ENCODE measurements at regions of chr3 and their contacts with region 1.

Region 1: DNA sequence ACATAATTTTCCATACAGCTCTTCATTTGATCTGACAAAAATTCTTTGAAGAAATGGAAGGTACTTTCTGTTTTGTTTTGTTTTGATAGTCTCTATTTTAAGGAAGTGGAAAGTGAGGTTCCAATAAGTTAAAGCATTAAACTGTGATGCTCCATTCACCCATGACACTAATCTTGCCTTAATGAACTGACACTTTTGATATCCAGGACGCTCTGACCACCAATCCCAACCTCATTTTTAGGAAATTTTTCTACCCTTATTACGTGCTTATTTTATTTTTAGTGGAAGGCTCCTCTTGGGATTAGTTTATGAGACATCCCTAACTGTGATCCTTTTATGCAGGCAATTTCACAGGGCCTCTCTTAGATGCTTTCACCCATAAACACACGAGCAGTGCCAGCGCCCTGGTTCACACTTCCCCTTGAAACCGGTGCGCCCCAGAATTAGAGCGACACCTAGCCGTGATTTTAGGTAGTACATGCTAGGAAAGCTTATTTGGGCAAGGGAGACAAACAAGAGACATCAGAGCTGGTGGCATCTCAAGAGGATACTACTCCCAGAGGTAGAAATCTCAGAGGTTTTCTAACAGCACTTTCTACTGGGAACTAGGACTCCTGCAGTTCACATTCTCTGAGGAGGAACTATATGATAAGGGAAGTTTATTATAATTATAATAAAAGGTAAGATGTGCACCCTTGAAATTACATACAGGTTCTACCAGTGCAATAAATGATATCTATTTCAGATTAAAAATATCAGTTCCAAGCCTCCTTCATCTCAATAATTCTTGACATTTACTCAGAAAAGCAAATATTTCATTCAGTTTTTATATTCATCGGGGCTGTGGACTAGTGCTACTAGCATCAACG is 173.9 kb downstream of the SLC9A9 start:
- DNase-seq: peak; percentile 84
- H3K4me3 Mint-ChIP-seq: peak overlapping the region; percentile 64
- H3K27ac Mint-ChIP-seq: no peak overlapping the region
- H3K4me1 Mint-ChIP-seq: peaks cover 8% of the 10 kb centered on the region
- H3K27me3 Mint-ChIP-seq: no peaks in the 10 kb centered on the region

Region 2: GRCh38 chr3:143001369-143002082 is 672.8 kb before region 1 on chr3 and contains the start of gene U2SURP:
- CTCF ChIA-PET with region 1: interaction called, 8 read pairs
- POLR2A ChIA-PET with region 1: no interaction called
- intact Hi-C with region 1: loop called (anchors 10 kb)
- DNase-seq: peak; percentile 95
- H3K4me3 Mint-ChIP-seq: peak within 1 kb of the TSS; percentile 88
- H3K27ac Mint-ChIP-seq: peak within 1 kb of the TSS; percentile 96
- H3K4me1 Mint-ChIP-seq: peaks cover 34% of the 10 kb centered on the region
- H3K27me3 Mint-ChIP-seq: no peaks in the 10 kb centered on the region
- total RNA-seq, gene U2SURP: 178 to 182 TPM

Region 3: DNA sequence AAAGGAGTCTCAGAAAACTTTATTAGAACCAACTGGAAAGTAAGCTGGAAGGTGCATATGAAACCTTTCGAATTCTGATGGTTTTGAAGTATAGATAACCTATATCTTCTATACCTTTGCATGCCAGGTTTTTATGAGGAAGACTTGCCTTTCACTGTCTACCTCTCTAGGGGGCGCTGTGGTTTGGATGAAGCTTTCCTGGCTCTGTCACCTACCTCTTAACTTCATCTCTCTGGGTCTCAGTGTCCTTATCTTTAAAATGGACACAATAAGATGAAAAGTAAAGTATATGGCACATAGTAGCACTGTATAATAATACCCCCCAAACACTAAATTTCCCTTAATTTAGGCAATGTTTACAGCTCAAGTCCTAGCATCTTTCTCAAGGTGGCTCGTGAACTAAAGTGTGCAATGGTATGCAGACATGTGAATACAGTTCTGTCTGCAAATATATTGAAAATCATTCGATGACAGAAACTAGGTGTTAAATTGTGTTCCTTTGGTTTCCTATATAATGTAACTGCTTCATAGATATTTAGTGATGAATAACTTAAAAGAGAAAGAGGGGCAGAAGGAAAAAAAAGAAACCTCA is 240.5 kb before region 1 on chr3:
- CTCF ChIA-PET with region 1: interaction called, 21 read pairs
- POLR2A ChIA-PET with region 1: no interaction called
- intact Hi-C with region 1: loop called (anchors 1 kb)
- DNase-seq: peak; percentile 53
- H3K4me3 Mint-ChIP-seq: no peak overlapping the region
- H3K27ac Mint-ChIP-seq: no peak overlapping the region
- H3K4me1 Mint-ChIP-seq: no peaks in the 10 kb centered on the region
- H3K27me3 Mint-ChIP-seq: no peaks in the 10 kb centered on the region

Region 4: DNA sequence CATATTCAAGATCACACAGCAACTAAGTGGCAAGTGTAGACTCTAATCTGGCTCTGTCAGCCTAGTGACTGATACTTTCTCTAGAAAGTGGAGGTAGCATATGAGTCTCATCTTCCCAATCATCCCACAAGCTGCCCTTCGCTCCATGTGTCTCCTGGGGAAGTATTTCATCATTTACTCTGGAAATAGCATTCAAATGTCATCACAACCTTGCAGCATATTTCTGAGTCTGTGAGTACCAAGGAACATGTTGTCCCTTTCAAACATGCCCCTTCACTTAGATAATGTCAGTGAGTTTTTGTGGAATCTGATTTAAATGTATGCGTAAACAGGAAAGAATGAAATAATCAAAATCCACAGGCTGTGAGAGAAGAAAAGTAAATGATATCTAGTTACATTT is 148.9 kb before region 1 on chr3:
- CTCF ChIA-PET with region 1: no interaction called
- POLR2A ChIA-PET with region 1: no interaction called
- intact Hi-C with region 1: no loop called
- DNase-seq: no peak
- H3K4me3 Mint-ChIP-seq: no peak overlapping the region
- H3K27ac Mint-ChIP-seq: no peak overlapping the region
- H3K4me1 Mint-ChIP-seq: no peaks in the 10 kb centered on the region
- H3K27me3 Mint-ChIP-seq: no peaks in the 10 kb centered on the region

Region 5: DNA sequence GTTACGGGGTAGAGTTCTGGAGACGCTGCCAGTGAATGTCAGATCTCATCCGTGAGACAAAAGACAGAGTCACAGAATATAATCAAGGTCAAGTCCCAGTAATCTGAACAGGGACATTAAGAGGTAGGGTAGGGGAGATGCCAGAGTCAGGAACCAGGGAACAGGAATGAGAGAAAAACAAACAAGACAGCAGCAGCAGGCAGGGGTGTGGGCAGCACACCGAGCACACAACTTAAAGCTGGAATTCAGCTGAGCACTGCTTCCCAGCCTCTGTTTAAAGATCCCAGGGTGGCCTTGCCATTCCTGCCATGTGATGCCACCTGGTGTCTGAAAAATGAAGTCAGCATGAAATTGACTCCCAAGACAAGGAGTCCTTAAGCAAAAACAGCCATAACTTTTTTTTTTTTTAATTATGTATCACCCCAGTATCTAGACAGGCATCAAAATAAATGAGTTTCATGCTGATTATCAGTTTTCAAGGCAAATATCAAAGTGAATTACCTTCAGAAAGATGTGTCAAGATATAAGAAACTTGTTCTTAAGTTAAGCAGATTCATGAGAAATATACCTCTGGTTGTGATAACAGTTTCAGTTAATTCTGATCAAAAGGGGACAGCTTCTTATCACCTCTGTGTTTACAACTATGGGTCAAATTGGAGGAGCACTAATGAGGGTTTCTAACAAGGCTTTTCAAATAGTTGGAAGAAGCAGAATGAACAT is 29.8 kb before region 1 on chr3:
- CTCF ChIA-PET with region 1: interaction called, 11 read pairs
- POLR2A ChIA-PET with region 1: no interaction called
- intact Hi-C with region 1: no loop called
- DNase-seq: peak; percentile 27
- H3K4me3 Mint-ChIP-seq: no peak overlapping the region
- H3K27ac Mint-ChIP-seq: no peak overlapping the region
- H3K4me1 Mint-ChIP-seq: no peaks in the 10 kb centered on the region
- H3K27me3 Mint-ChIP-seq: no peaks in the 10 kb centered on the region

Region 6: DNA sequence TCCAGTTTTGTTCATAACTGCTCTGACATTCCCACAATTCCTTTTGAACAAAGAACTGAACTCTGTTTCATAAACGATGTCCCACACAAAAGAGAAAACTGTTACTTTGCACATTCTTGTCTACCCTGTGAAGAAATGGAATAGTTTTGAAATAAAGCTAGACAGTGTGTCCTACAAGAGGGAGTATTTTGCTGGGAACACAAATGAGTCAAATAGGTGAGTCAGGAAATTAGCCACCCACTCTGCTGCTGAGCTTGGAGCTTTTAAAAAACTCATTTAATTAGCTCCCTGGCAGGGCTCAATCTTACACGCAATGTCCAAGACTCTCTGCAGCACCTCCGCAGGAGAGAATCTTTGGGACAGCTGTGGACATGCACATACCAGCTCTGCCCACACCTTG is 19.4 kb before region 1 on chr3:
- CTCF ChIA-PET with region 1: interaction called, 11 read pairs
- POLR2A ChIA-PET with region 1: no interaction called
- intact Hi-C with region 1: no loop called
- DNase-seq: no peak
- H3K4me3 Mint-ChIP-seq: no peak overlapping the region
- H3K27ac Mint-ChIP-seq: no peak overlapping the region
- H3K4me1 Mint-ChIP-seq: no peaks in the 10 kb centered on the region
- H3K27me3 Mint-ChIP-seq: no peaks in the 10 kb centered on the region

Region 7: DNA sequence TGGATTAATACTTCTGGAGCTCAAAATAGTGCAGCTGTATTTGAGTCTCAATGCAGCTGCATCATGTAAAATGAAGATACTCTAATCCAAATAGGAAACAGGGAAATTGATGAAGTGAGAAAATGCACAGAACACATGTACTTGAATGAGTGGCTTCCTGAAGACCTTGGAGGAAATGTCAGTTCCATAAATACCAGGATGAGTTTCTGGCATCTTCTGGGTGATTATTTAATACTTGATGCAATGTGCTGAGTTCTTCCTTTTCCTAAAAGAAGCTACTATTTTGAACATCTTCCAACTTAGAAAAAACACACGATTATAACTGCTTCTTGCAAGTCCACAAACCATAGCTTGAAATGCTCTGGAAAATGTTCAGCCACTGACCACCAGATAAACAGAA is 11.2 kb after region 1 on chr3:
- CTCF ChIA-PET with region 1: interaction called, 18 read pairs
- POLR2A ChIA-PET with region 1: no interaction called
- intact Hi-C with region 1: no loop called
- DNase-seq: no peak
- H3K4me3 Mint-ChIP-seq: no peak overlapping the region
- H3K27ac Mint-ChIP-seq: no peak overlapping the region
- H3K4me1 Mint-ChIP-seq: peaks cover 5% of the 10 kb centered on the region
- H3K27me3 Mint-ChIP-seq: no peaks in the 10 kb centered on the region

Region 8: GRCh38 chr3:143849854-143850549 is 175.7 kb after region 1 on chr3:
- CTCF ChIA-PET with region 1: no interaction called
- POLR2A ChIA-PET with region 1: no interaction called
- intact Hi-C with region 1: no loop called
- DNase-seq: no peak
- H3K4me3 Mint-ChIP-seq: no peak overlapping the region
- H3K27ac Mint-ChIP-seq: no peak overlapping the region
- H3K4me1 Mint-ChIP-seq: peaks cover 53% of the 10 kb centered on the region
- H3K27me3 Mint-ChIP-seq: no peaks in the 10 kb centered on the region

Measured in activated CD4-positive, alpha-beta memory T cell treated with anti-CD3 and anti-CD28 coated beads for 36 hours (primary cell).